Right ventricle myocardium inferior (tissue), 1 donor: ENCODE measurements at regions of chr21 and their contacts with region 1.

Region 1: GRCh38 chr21:20999659-21000058 is 1.4 kb downstream of the NCAM2 start:
- DNase-seq: no peak
- ATAC-seq: peak; percentile 56

Region 2: DNA sequence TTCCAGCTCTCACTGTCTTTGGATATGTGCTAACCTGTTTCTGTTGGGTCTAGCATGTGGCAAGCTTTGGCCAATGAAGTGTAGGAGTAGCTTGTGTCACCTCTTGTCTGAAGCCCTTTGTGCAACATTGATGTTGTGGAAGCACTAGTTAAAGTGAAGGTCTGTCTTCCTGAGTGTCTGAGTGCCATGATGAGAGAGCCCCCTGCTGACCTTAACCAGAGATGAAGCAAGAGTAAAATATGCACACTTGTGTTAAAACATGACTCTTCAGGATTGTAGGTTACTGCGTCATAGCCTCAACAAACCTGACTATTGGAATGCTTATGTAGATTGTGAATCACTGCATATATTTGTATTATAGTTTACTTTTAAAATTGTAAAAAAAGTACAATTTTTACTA is 102.3 kb after region 1 on chr21:
- intact Hi-C with region 1: loop called (anchors 2 kb)
- DNase-seq: no peak
- ATAC-seq: no peak

Region 3: GRCh38 chr21:22791986-22792560 is 1792.4 kb after region 1 on chr21:
- intact Hi-C with region 1: loop called (anchors 10 kb)
- DNase-seq: no peak
- ATAC-seq: no peak